A549 (cell line): ENCODE measurements at regions of chr7 and their contacts with region 1.

Region 1: GRCh38 chr7:3102159-3102558 is 58.5 kb upstream of the CARD11 start:
- DNase-seq: no peak
- ATAC-seq: no peak
- H3K4me3 ChIP-seq: no peak overlapping the region
- H3K27ac ChIP-seq: no peak overlapping the region
- H3K4me1 ChIP-seq: no peaks in the 10 kb centered on the region
- CTCF ChIP-seq: no peak
- EP300 ChIP-seq: no peak
- POLR2A ChIP-seq: no peak
- RAD21 ChIP-seq: no peak

Region 2: GRCh38 chr7:3089493-3089892 is 12.7 kb before region 1 on chr7:
- CTCF ChIA-PET with region 1: interaction called, 17 read pairs
- POLR2A ChIA-PET with region 1: no interaction called
- DNase-seq: peak; percentile 51 to 56
- ATAC-seq: peak; percentile 67 to 87; a peak in 5 of 6 replicates
- H3K4me3 ChIP-seq: no peak overlapping the region
- H3K27ac ChIP-seq: no peak overlapping the region
- H3K4me1 ChIP-seq: no peaks in the 10 kb centered on the region
- CTCF ChIP-seq: peak; percentile 45
- EP300 ChIP-seq: no peak
- POLR2A ChIP-seq: no peak
- RAD21 ChIP-seq: peak; percentile 41 to 55; a peak in 4 of 5 replicates

Region 3: GRCh38 chr7:3210531-3210930 is 108.4 kb after region 1 on chr7:
- CTCF ChIA-PET with region 1: no interaction called
- POLR2A ChIA-PET with region 1: no interaction called
- DNase-seq: no peak
- ATAC-seq: peak; percentile 43 to 53; a peak in 3 of 6 replicates
- H3K4me3 ChIP-seq: no peak overlapping the region
- H3K27ac ChIP-seq: no peak overlapping the region
- H3K4me1 ChIP-seq: no peaks in the 10 kb centered on the region
- CTCF ChIP-seq: no peak
- EP300 ChIP-seq: no peak
- POLR2A ChIP-seq: no peak
- RAD21 ChIP-seq: peak in 1 of 2 experiments; percentile 26; a peak in 2 of 5 replicates